Right ventricle myocardium superior (tissue), 1 donor: ENCODE measurements at regions of chr9 and their contacts with region 1.

Region 1: GRCh38 chr9:96667361-96667728 is 12.2 kb upstream of the PRXL2C start:
- DNase-seq: no peak
- ATAC-seq: no peak

Region 2: DNA sequence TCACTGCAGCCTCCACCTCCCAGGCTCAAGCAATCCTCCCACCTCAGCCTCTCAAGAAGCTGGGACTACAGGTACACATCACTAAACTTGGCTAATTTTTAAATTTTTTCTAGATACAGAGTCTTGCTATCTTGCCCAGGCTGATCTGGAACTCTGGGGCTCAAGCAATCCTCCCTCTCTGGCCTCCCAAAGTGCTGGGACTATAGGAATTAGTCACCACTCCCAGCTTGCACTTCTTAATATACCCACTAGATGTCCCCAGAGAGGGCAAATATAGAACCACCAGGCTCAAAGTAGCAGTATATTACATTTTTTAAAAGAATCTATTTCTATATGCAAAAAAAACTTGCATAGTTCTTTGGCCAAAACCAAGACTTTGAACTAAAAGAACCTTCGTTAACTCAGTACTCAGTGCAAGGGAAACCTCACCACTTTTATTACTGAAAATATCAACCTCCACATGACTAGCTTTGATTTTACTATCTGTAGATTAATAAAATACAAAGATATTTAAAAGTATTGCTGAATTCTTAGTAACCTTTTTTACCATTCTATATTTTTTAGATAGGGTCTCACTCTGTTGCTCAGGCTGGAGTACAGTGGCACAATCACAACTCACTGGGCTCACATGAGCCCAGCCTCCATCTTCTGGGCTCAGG is 339.5 kb before region 1 on chr9:
- intact Hi-C with region 1: loop called (anchors 2 kb)
- DNase-seq: no peak
- ATAC-seq: peak; percentile 88

Region 3: DNA sequence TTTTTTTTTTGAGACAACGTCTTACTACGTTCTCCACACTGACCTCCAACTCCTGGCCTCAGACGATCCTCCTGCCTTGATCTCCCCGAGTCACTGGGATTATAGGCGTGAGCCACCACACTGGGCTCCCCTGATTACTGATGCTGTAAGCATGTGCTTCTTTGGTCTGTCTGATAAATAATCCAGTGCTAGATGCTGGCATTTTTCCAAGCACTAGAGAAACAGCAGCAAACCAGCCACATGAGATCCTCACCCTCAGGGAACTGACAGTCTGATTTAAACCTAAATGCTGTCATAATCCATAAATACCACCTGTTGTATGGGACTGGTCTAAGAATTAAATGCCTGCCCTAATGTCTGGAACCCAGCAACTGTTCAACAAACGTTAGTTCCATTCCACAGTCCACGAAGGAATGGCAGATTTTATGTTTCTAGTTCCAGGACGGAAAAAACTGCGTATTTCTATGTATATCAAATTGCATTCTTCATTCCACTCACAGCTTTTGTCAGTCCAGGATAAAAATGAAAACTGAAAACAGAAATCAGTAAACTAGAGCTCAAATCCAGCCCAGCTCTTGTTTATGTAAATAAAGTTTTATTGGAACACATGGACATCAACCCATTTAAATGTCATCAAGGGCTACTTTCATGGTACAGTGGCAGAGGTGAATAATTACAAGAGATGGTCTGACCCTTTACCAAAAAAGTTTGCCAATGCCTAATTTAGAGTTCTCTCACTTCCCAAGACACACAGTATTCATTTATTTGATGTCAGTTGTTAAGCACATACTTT is 304.0 kb before region 1 on chr9:
- intact Hi-C with region 1: no loop called
- DNase-seq: no peak
- ATAC-seq: no peak

Region 4: GRCh38 chr9:96619491-96620154 is 47.7 kb before region 1 on chr9 and contains the start of gene CDC14B:
- intact Hi-C with region 1: no loop called
- DNase-seq: peak; percentile 94
- ATAC-seq: peak; percentile 79
- total RNA-seq, gene CDC14B: 15.1 TPM